Dorsolateral prefrontal cortex (tissue), 120 donors: ENCODE measurements at regions of chr21 and their contacts with region 1.

Region 1: DNA sequence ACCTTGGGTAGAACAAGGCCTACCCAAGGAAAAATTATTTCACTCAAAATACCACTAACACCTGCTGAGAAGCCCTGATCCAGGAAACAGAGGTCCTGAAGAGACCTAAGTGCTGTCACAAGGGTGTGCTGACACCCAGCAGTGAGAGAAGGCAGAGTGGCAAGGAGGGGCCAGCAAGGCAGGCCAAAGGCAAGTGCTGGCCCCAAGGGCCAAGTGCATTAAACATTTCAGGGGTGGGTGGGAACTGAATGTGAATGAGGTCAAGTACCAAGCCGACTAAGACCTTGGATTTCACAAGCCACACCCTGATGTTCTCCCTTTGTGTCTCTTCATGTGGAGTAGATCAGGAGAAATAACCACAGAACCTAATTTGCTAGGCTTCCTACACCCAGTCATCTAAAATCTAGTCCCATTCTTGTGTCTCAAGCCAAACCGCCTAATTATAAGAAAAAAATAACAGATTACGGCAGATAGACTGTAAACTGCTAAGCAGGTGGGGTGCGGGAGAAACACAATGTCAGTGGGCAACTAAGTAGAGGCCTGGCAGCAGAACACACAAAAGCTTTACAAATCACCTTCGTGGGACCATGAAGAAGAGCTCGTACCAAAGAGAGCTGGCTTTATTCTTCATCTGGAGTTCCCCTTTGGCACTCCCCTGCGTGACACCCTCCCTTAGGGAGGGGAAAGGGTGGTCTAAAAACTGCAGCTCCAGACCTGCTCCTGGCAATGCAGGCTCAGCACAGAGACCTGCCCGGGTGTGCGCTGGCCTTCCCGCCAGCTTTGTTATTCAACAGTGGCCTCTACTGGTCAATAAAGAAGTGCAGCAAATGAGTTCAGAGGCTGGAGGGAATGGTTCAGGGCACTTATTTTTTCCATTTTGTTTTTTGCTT is 8.7 kb downstream of the UBE2G2 start:
- DNase-seq: peak in 3 of 10 donors; percentile 36 to 62 (median 54)
- H3K4me3 ChIP-seq: no peak overlapping the region
- H3K27ac ChIP-seq: peak overlapping the region in 2 of 59 donors; percentile 7 to 21
- H3K27me3 ChIP-seq: no peaks in the 10 kb centered on the region
- CTCF ChIP-seq: peak; percentile 52 to 86 (median 74)

Region 2: DNA sequence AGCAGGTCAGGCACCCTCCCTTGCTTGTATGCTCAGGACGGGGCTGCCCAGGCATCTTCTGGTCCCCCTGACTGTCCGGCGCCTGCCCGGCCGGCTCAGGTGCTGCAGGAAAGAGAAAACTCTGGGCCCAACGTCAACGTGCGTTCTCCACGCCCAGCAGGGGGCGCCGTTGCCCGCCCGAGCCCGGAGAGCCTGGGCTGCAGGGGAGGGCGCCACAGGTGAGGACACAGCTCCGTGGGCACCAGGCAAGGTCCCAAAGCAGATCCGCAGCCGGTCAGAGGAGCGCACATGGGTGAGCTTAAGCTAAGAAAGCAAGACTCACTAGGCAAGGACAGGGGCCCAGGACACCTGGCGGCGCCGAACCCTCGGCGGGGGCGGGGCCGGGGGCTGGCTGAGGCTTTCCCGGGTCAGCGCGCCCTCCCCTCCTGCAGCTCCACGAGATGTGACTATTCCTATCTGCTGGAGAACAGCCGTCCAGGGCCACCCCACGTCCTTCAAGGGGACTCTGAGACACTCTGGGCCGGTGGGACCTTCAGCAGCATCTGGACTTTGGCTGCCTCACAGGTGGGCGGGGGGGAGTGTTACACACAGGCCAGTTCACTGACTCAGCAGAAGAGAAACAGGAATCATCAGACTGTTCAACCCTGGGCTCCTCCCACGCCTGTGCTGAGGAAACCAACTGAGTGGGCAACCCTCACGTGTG is 282.3 kb before region 1 on chr21:
- intact Hi-C with region 1: loop called in 1 of 2 experiments (anchors 2 kb)
- DNase-seq: peak in 1 of 10 donors; percentile 59
- H3K4me3 ChIP-seq: no peak overlapping the region
- H3K27ac ChIP-seq: no peak overlapping the region
- H3K27me3 ChIP-seq: peaks cover 0 to 19% (median 3%) of the 10 kb centered on the region in 45 donors
- CTCF ChIP-seq: peak; percentile 33 to 79 (median 64)

Region 3: GRCh38 chr21:44686843-44687561 is 105.9 kb before region 1 on chr21:
- intact Hi-C with region 1: no loop called
- DNase-seq: peak in 1 of 10 donors; percentile 26
- H3K4me3 ChIP-seq: no peak overlapping the region
- H3K27ac ChIP-seq: no peak overlapping the region
- H3K27me3 ChIP-seq: peaks cover 0 to 72% (median 28%) of the 10 kb centered on the region in 45 donors
- CTCF ChIP-seq: no peak

Region 4: GRCh38 chr21:44723177-44724131 is 69.5 kb before region 1 on chr21:
- intact Hi-C with region 1: no loop called
- DNase-seq: no peak
- H3K4me3 ChIP-seq: no peak overlapping the region
- H3K27ac ChIP-seq: no peak overlapping the region
- H3K27me3 ChIP-seq: peaks cover 0 to 93% (median 61%) of the 10 kb centered on the region in 45 donors
- CTCF ChIP-seq: no peak

Region 5: DNA sequence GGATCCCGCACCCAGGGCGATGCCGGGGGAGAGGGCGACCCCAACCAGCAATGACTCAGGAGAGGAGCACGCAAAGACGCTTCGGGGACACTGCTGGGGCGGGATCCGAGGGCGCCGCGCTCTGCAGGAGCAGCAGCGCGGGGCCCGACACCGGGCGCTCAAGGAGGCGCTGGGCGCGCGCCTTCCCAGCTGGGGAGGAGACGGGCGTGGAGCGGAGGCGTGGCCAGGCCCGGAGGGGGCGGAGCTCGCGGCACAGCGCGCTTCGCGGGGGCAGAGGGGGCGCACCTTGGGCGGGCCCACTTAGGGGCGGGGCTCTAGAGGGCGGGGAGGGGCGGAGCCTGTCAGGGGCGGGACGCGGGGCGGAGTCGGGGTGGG is 24.5 kb after region 1 on chr21:
- intact Hi-C with region 1: no loop called
- DNase-seq: peak; percentile 74 to 95 (median 86)
- H3K4me3 ChIP-seq: peak overlapping the region; percentile 43 to 88 (median 79)
- H3K27ac ChIP-seq: peak overlapping the region in 51 of 59 donors; percentile 7 to 97 (median 86)
- H3K27me3 ChIP-seq: no peaks in the 10 kb centered on the region
- CTCF ChIP-seq: peak in 5 of 56 donors; percentile 4 to 18 (median 8)